ENCODE measurements at regions of chr10 and their contacts with region 1.

Region 1: DNA sequence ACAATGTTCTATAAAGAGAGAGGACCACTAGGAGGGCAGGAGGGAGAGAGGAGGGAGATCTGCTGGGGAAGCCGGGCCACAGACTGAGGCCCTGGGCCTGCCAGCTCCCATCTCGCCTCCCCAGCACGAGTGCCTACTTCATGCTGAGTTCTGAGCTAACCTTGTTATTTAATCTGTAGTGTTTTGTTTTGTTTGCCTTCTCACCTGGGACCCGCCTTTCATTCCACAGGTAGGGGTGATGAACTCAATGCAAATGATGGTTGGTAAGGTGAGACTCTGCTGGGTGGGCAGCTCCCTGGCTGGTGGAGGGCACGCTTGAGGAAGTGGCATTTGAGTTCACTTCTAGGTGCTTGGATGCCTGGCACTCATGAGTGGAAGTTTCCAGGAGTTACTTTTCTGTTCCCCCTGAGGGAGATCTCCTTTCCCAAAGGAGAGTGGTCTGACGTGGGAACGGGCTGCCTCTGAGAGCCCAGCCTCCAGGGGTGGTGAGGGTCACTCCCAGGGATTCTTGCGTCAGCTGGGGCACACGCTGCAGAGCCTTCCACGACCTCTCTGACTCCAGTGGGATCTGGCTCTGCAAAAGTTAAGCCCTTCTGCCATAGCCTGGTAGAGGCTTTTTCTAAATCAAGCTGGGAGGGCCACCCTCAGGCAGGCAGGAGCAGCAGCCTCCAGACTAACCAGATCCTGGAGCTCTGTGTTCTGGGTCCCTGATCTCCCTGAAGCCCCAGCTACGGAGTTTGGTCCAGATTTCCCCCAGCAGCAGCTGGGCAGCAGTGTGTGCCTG is 22.4 kb downstream of the UBTD1 start:
- DNase-seq: no peak
- H3K4me3 Mint-ChIP-seq: no peak overlapping the region
- H3K27ac Mint-ChIP-seq: no peak overlapping the region
- H3K4me1 Mint-ChIP-seq: no peaks in the 10 kb centered on the region
- H3K27me3 Mint-ChIP-seq: peaks cover 11% of the 10 kb centered on the region

Region 2: GRCh38 chr10:97534746-97535367 is 13.7 kb after region 1 on chr10:
- CTCF ChIA-PET with region 1: interaction called, 13 read pairs
- POLR2A ChIA-PET with region 1: no interaction called
- DNase-seq: peak; percentile 24
- H3K4me3 Mint-ChIP-seq: no peak overlapping the region
- H3K27ac Mint-ChIP-seq: no peak overlapping the region
- H3K4me1 Mint-ChIP-seq: no peaks in the 10 kb centered on the region
- H3K27me3 Mint-ChIP-seq: no peaks in the 10 kb centered on the region

Measured in activated CD4-positive, alpha-beta T cell treated with anti-CD3 and anti-CD28 coated beads, Interleukin-2, amount 10 ng/mL, durations not matched to agents 7 days and 5 days (primary cell).